GM12878 (cell line): ENCODE measurements at regions of chr18 and their contacts with region 1.

Region 1: DNA sequence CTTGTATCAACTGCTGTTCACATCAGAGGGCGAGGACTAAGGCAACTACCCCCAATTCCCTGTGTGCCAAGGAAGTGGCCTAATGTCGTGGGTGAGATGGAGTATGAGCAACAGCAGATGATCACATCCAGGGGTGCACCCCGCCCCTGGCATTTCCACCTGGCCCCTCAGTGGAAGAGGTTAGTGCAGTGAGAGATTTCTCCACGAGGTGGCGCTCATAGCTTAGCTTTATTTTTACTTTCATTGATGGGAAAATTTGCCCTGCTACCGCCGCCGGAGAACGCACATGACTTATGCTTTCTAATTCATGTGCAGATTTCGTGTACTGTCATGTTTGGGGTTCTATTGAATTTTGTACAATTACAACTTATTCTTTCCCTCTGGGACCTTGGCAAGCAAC is 470.6 kb upstream of the MEX3C start:
- DNase-seq: no peak
- ATAC-seq: peak; percentile 90
- H3K4me3 ChIP-seq: no peak overlapping the region
- H3K27ac ChIP-seq: no peak overlapping the region
- H3K4me1 ChIP-seq: no peaks in the 10 kb centered on the region
- H3K27me3 ChIP-seq: no peaks in the 10 kb centered on the region
- CTCF ChIP-seq: peak; percentile 70 to 84 (median 80)
- EP300 ChIP-seq: no peak
- POLR2A ChIP-seq: no peak
- RAD21 ChIP-seq: peak; percentile 85

Region 2: DNA sequence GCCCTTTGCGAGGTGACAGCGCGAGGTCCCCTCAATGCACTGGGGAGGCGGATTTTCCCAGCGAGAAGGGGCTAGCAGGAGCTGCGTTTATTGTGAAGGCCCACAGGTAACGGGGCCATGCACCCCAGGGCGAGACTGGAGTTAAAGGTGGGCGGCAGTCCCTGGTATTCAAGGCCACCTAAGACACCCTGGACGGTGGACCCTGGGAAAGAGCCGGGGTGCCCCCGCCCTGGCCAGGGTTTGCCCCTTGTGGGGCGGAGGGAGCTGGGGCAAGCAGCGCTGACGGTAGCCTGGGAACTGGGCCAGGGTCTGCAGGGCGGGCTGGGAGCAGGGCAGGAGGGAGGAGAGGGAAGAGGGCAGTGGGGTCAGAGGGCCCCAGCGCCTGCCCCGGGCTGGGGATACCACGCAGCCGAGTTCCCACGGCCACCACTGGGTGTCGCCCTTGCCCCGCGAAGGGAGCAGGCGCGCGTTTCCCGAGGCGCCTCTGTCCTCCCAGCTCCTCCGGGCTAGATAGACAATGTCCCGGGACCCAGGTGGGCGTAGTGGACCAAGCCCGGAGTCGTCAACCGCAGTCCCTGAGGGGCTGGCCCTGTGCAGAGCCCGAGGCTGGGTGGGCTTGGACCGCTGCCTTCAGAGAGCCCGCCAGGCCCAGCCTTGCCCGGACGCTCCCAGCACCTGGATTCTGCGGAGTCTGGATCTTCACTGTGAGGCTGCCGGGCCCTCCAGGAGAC is 557.9 kb before region 1 on chr18:
- CTCF ChIA-PET with region 1: interaction called, 7 read pairs
- POLR2A ChIA-PET with region 1: no interaction called
- RAD21 ChIA-PET with region 1: interaction called, 10 read pairs
- SMC1A ChIA-PET with region 1: interaction called, 8 read pairs
- in situ Hi-C with region 1: no loop called
- intact Hi-C with region 1: loop called (anchors 5 kb)
- DNase-seq: no peak
- ATAC-seq: peak; percentile 99
- H3K4me3 ChIP-seq: no peak overlapping the region
- H3K27ac ChIP-seq: no peak overlapping the region
- H3K4me1 ChIP-seq: peaks cover 8% of the 10 kb centered on the region; the same call in 1 of the 2 replicates
- H3K27me3 ChIP-seq: no peaks in the 10 kb centered on the region
- CTCF ChIP-seq: peak; percentile 79 to 98 (median 96)
- EP300 ChIP-seq: no peak
- POLR2A ChIP-seq: no peak
- RAD21 ChIP-seq: peak; percentile 94

Region 3: GRCh38 chr18:51711298-51711889 is 43.3 kb after region 1 on chr18:
- CTCF ChIA-PET with region 1: interaction called, 5 read pairs
- POLR2A ChIA-PET with region 1: interaction called, 4 read pairs
- RAD21 ChIA-PET with region 1: interaction called, 7 read pairs
- SMC1A ChIA-PET with region 1: interaction called, 12 read pairs
- in situ Hi-C with region 1: no loop called
- intact Hi-C with region 1: no loop called
- DNase-seq: no peak
- ATAC-seq: peak; percentile 89
- H3K4me3 ChIP-seq: no peak overlapping the region
- H3K27ac ChIP-seq: no peak overlapping the region
- H3K4me1 ChIP-seq: peaks cover 31% of the 10 kb centered on the region
- H3K27me3 ChIP-seq: no peaks in the 10 kb centered on the region
- CTCF ChIP-seq: no peak
- EP300 ChIP-seq: no peak
- POLR2A ChIP-seq: no peak
- RAD21 ChIP-seq: no peak

Region 4: GRCh38 chr18:51879329-51879728 is 211.2 kb after region 1 on chr18:
- CTCF ChIA-PET with region 1: interaction called, 5 read pairs
- POLR2A ChIA-PET with region 1: no interaction called
- RAD21 ChIA-PET with region 1: interaction called, 3 read pairs
- SMC1A ChIA-PET with region 1: interaction called, 13 read pairs
- in situ Hi-C with region 1: no loop called
- intact Hi-C with region 1: no loop called
- DNase-seq: no peak
- ATAC-seq: peak; percentile 63; the same call in 2 of the 3 replicates
- H3K4me3 ChIP-seq: no peak overlapping the region
- H3K27ac ChIP-seq: no peak overlapping the region
- H3K4me1 ChIP-seq: no peaks in the 10 kb centered on the region
- H3K27me3 ChIP-seq: no peaks in the 10 kb centered on the region
- CTCF ChIP-seq: no peak
- EP300 ChIP-seq: no peak
- POLR2A ChIP-seq: no peak
- RAD21 ChIP-seq: no peak

Region 5: GRCh38 chr18:52280702-52281101 is 612.6 kb after region 1 on chr18:
- CTCF ChIA-PET with region 1: interaction called, 40 read pairs
- POLR2A ChIA-PET with region 1: no interaction called
- RAD21 ChIA-PET with region 1: interaction called, 16 read pairs
- SMC1A ChIA-PET with region 1: interaction called, 25 read pairs
- in situ Hi-C with region 1: loop called (anchors 5 kb)
- intact Hi-C with region 1: no loop called
- DNase-seq: no peak
- ATAC-seq: no peak
- H3K4me3 ChIP-seq: no peak overlapping the region
- H3K27ac ChIP-seq: no peak overlapping the region
- H3K4me1 ChIP-seq: no peaks in the 10 kb centered on the region
- H3K27me3 ChIP-seq: no peaks in the 10 kb centered on the region
- CTCF ChIP-seq: no peak
- EP300 ChIP-seq: no peak
- POLR2A ChIP-seq: no peak
- RAD21 ChIP-seq: no peak

Region 6: GRCh38 chr18:52694804-52695203 is 1026.7 kb after region 1 on chr18:
- CTCF ChIA-PET with region 1: interaction called, 3 read pairs
- POLR2A ChIA-PET with region 1: no interaction called
- RAD21 ChIA-PET with region 1: interaction called, 3 read pairs
- SMC1A ChIA-PET with region 1: interaction called, 3 read pairs
- in situ Hi-C with region 1: loop called (anchors 10 kb)
- intact Hi-C with region 1: no loop called
- DNase-seq: no peak
- ATAC-seq: peak; percentile 69
- H3K4me3 ChIP-seq: no peak overlapping the region
- H3K27ac ChIP-seq: no peak overlapping the region
- H3K4me1 ChIP-seq: no peaks in the 10 kb centered on the region
- H3K27me3 ChIP-seq: no peaks in the 10 kb centered on the region
- CTCF ChIP-seq: peak; percentile 31 to 39 (median 36); a peak in 3 of 6 replicates
- EP300 ChIP-seq: no peak
- POLR2A ChIP-seq: no peak
- RAD21 ChIP-seq: peak; percentile 25; the same call in 1 of the 2 replicates